Activated T-helper 1 cell treated with anti-CD3 and anti-CD28 coated beads, Interleukin-12 subunit alpha, Interleukin-12 subunit beta, Interleukin-2, Interleukin-4 antibody, amounts not matched to agents 30 ng/mL and 10 ng/mL and 1 ng/mL, durations not matched to agents 14 hours and 24 hours and 36 hours (primary cell): ENCODE measurements at regions of chr6 and their contacts with region 1.

Region 1: DNA sequence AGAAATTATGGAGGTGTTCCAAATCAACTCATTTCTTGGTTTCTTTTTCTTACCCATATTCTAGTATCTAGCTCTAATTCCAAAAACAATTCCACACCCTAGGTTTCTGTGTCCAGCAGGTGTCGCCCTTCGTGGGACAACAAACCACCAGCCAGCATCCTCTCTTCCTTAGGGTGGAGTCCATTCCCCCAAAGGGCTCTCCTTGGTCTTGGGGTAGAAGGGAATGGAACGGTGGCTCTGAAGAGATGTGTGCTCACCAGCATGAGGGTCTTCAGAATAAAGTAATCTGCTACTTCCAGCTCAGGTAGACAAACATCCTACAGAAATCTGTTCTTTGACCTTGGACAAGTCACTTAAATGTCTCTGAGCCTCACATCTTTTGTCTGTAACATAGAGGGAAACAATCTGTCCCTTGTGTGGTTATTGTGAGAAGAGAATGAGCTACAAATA is 7.2 kb downstream of the HLA-DMB start:
- DNase-seq: peak; percentile 60
- H3K4me3 Mint-ChIP-seq: no peak overlapping the region
- H3K27ac Mint-ChIP-seq: no peak overlapping the region
- H3K4me1 Mint-ChIP-seq: peaks cover 11% of the 10 kb centered on the region
- H3K27me3 Mint-ChIP-seq: peaks cover 17% of the 10 kb centered on the region

Region 2: DNA sequence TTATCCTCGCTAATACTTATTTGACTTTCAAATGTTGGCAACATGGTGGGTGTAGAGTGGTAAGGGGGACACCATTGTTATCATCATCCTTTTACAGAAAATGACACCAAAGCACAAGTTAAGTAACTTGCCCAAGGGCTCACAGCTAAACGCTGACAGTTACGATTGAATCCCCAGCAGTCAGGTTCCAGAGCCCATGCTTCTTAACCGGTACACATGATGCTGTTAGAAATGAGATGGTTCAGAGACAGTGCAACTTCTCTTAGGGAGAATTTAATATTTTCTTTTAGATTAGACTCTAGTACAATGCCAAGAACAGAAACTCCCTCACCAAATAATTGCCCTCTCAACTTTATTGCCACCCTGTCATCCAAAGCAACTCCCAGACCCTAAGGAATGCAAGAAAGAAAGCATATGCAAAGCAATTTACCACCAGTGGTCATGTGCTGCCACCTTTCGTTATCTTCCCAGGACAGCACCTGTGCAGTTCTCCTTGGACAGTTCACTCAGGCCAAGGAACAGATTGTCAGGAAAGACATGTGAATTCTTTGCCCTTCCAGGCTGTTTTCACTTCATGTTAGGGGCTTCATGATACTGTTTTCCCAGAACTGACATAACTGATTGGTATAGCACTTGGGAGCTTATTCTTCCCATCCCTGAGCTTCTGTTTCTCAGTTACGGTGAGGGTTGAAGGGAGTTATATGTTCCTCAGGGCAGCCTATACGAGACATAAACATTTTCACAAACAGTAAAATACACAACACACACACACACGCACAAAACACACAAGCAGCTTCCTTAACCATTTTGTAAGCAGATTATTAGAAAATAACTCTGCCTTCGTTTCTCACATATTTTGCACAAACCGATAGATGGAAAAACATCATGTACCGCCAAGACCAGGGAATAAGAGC is 14.1 kb after region 1 on chr6:
- intact Hi-C with region 1: loop called (anchors 1 kb)
- DNase-seq: peak; percentile 11
- H3K4me3 Mint-ChIP-seq: no peak overlapping the region
- H3K27ac Mint-ChIP-seq: peak overlapping the region; percentile 15
- H3K4me1 Mint-ChIP-seq: peaks cover 62% of the 10 kb centered on the region
- H3K27me3 Mint-ChIP-seq: no peaks in the 10 kb centered on the region

Region 3: GRCh38 chr6:32952817-32953739 is 19.4 kb after region 1 on chr6 and contains the start of gene HLA-DMA:
- intact Hi-C with region 1: loop called (anchors 1 kb)
- DNase-seq: peak; percentile 79
- H3K4me3 Mint-ChIP-seq: peak within 1 kb of the TSS; percentile 81
- H3K27ac Mint-ChIP-seq: peak within 1 kb of the TSS; percentile 72
- H3K4me1 Mint-ChIP-seq: peaks cover 57% of the 10 kb centered on the region
- H3K27me3 Mint-ChIP-seq: no peaks in the 10 kb centered on the region
- total RNA-seq, gene HLA-DMA: 14.1 and 14.2 TPM in 2 replicates

Region 4: GRCh38 chr6:32984605-32985389 is 51.1 kb after region 1 on chr6:
- intact Hi-C with region 1: loop called (anchors 1 kb)
- DNase-seq: peak; percentile 78
- H3K4me3 Mint-ChIP-seq: no peak overlapping the region
- H3K27ac Mint-ChIP-seq: peak overlapping the region; percentile 73
- H3K4me1 Mint-ChIP-seq: peaks cover 37% of the 10 kb centered on the region
- H3K27me3 Mint-ChIP-seq: no peaks in the 10 kb centered on the region

Region 5: DNA sequence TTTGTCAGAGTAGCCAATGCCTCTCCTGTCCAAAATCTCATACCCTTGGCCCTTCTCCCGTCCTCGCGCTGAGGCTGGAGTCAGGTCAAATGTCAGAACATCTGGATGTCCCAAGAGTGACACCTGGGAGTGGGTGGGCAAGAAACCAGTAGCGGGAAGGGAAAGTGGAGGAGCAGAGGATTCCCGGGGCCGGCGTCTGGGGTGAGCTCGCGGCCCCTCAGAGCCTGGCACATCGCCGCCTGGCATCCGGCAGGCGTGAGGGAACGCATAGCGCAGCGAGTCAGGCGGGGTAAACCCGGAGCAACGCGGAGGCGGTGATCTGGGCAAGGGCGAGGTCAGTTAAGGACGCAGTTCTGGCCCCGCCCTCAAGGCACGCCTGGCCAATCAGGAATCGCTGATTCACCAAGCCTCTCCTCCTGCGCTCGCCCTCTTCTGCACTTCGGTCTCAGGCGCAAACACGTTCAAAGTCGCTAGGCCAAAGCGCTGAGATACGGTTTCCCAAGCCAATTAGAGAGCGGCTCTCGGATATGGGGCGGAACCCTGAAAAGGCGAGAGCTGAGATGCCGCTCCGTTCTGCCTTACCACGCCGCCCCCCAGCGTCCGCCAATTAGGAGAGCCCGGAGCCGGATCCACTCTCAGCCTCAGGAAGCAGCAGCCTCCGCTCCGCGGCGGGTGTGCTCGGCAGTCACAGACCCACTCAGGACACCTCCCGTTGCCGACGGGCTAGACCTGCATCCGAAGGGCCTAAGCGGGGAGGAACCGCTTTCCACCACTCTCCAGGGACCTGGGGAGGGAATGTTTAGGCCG is 315.5 kb after region 1 on chr6:
- intact Hi-C with region 1: no loop called
- DNase-seq: peak; percentile 95
- H3K4me3 Mint-ChIP-seq: peak overlapping the region; percentile 91
- H3K27ac Mint-ChIP-seq: peak overlapping the region; percentile 84
- H3K4me1 Mint-ChIP-seq: peaks cover 44% of the 10 kb centered on the region
- H3K27me3 Mint-ChIP-seq: peaks cover 4% of the 10 kb centered on the region